Activated CD4-positive, alpha-beta T cell treated with anti-CD3 and anti-CD28 coated beads, Interleukin-2, amount 10 ng/mL, durations not matched to agents 7 days and 5 days (primary cell): ENCODE measurements at regions of chr17 and their contacts with region 1.

Region 1: DNA sequence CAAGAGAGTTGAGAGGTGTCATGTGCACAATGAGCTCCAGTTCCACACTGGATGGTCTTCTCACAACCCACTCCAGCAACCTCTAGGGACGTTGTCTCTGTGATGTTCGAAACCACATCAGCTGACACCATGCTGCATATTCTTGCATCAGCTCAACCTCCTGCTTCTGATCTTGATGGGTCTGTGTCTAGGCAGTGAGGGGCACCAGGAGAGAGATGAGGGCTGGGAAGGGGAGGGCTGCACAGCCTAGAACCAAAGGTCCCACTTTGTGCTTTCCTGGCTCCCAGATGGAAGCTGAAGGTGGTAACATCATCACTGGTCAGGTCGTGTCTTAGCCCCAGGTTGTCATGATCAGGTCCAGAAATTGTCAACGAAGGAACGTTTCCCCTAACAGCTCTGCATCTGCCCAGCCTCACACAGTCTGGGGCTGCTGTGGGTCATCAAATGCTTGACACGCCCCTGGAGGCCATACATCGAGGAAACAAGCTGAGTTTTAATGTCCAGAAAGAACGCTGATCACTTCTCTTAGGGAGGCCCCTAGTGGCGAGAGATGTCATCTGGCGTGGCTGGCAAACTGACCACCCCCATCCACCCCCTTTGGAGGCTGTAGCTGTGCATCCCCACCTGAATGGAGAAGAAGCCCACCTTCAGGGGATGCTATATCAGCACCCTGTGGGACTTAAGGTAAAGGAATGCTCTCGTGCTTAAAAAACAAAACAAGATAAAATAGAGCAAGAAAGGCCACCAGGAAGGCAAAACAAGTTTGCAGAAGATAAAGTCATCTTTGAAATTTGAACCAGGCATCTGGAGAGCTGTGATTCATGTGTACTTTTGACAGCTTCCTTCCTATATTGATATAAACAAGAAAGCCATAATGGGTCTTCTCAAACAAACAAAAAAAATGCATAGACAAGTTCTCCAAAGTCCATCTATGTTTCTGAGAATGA is 58.3 kb downstream of the WIPI1 start:
- DNase-seq: peak; percentile 38
- H3K4me3 Mint-ChIP-seq: no peak overlapping the region
- H3K27ac Mint-ChIP-seq: peak overlapping the region; percentile 90
- H3K4me1 Mint-ChIP-seq: peaks cover 41% of the 10 kb centered on the region
- H3K27me3 Mint-ChIP-seq: no peaks in the 10 kb centered on the region

Region 2: DNA sequence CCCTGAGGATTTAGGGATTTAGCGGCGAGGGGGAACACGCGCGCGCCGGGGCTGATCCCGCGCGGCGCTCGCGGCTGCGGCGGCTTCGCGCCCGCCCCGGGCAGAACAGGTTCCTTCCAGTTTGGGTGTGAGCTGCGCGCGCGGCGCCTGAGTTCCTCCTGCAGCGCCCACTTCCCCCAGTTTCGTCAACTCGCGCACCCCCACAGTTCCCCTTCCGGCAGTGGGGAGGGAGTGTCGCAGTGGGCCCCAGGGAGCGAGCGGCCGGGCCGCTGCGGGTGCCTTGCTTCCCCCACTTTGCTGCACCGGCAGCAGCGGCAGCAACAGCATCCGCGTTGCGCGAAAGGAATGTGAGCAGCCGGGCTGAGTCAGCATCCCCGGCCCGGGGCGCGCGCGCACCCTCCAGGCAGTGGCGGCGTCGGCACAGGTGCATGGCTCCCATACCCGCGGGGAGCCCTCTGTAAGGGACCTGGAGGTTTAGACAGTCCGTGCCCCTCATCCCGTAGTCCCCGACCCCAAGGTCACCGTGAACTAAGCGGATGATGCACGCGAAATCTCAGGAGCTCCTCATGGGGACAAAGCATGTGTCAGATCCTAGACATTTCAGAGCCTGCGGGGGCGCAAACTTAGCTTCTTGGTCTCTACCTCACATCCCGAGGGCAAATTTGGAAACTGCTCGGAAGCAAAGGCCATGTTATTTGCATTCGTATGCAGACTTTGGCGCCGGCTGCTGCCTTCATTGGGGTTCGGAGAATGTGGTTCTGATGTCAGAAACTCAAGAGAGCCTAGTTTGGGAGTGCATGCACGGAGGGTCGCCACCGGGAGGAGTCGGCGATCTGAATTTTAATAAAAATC is 106.9 kb before region 1 on chr17:
- CTCF ChIA-PET with region 1: interaction called, 10 read pairs
- POLR2A ChIA-PET with region 1: interaction called, 5 read pairs
- DNase-seq: peak; percentile 95
- H3K4me3 Mint-ChIP-seq: peak overlapping the region; percentile 76
- H3K27ac Mint-ChIP-seq: peak overlapping the region; percentile 93
- H3K4me1 Mint-ChIP-seq: peaks cover 67% of the 10 kb centered on the region
- H3K27me3 Mint-ChIP-seq: no peaks in the 10 kb centered on the region

Region 3: DNA sequence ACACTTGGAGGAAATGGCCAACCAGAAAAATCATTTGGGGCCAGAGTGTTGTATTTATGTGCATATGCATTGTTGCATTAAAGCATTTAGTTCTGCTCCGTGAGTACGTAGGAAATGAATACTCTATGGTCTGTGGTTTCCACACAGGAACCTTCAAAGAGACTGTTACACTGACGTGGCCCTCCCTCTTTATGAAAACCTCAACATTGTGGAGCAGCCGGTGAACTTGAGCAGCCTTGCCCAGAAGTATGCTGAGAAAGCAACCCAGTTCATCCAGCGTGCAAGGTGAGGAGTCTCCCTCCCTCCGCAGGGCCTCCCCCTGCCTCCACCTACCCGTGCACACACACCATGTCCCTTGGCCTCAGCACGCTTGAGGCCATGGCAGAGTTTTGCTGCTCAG is 42.4 kb before region 1 on chr17:
- CTCF ChIA-PET with region 1: interaction called, 19 read pairs
- POLR2A ChIA-PET with region 1: no interaction called
- DNase-seq: peak; percentile 87
- H3K4me3 Mint-ChIP-seq: peak overlapping the region; percentile 59
- H3K27ac Mint-ChIP-seq: peak overlapping the region; percentile 88
- H3K4me1 Mint-ChIP-seq: peaks cover 70% of the 10 kb centered on the region
- H3K27me3 Mint-ChIP-seq: no peaks in the 10 kb centered on the region

Region 4: DNA sequence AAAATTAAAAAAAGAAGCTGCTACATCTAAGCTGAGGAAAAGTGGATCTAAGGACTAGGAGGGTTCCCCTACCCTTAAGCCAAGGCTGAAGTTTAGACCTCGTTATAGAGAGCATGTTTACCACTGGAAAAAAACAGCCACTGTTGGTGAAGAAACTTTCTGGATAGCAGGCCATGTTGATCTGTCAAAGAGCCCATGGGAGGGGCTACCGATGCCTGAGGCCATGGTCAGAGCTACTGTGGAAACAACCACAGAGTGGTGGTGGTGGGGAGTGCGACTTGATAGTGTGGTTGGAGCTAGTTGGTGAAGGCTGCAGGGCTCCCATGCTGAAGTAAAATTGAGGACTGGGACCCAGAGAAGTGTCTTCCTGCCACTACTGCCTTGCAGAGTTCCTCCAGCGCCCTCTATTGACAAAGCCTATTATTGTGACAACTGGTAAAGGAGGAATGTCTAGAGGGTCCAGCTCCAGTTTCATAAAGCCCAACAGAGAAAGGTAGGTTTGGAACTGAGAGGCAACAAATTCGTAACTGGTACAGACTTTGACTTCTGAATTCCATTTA is 214.9 kb after region 1 on chr17:
- CTCF ChIA-PET with region 1: no interaction called
- POLR2A ChIA-PET with region 1: no interaction called
- DNase-seq: peak; percentile 72
- H3K4me3 Mint-ChIP-seq: no peak overlapping the region
- H3K27ac Mint-ChIP-seq: no peak overlapping the region
- H3K4me1 Mint-ChIP-seq: no peaks in the 10 kb centered on the region
- H3K27me3 Mint-ChIP-seq: peaks cover 33% of the 10 kb centered on the region